ENCODE measurements at regions of chr22 and their contacts with region 1.

Region 1: DNA sequence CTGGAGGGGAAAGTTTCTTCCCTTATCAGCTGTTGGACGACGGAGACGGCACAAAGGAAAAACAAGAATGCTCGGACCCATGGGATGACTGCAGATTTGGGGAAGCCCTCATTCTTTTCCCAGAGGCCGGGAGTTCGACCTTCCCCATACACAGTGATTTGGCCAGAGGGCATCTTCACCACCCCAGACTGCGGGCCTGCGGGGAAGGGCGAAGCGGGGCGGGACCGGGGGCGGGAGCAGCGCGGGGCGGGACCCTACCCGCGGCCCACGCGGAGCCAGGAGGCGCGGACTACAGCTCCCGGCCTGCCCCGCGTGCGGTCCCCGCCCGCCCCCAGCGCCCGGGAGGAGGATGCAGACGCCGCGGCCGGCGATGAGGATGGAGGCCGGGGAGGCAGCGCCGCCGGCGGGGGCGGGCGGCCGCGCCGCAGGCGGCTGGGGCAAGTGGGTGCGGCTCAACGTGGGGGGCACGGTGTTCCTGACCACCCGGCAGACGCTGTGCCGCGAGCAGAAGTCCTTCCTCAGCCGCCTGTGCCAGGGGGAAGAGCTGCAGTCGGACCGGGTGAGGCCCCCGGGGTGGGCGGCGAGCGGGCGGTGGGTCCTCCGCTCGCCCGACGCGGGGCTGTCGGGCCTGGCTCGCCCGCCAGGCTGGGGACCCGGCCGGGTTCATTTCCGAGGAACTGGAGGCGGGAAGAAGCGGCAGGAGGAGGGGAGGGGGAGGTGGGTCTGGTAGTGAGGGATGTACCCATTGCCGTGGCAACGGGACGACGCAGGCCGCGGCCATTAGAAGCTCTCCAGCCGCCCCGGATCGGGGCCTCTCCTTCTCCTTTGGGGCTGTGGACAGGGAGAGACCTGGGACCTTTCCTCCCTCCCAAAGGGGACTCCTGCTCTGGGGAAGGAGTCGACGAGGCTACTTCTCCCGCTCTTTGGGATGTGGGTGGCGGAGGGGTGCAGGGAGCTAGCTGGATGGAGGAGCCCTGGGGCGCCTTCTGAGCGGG is at the start of gene KCTD17:
- DNase-seq: peak; percentile 67
- total RNA-seq, gene KCTD17: 11.2 and 14.0 TPM in 2 replicates

Region 2: GRCh38 chr22:37199103-37199759 is 147.5 kb after region 1 on chr22:
- in situ Hi-C with region 1: loop called (anchors 25 kb)
- DNase-seq: peak; percentile 99